Right cardiac atrium (tissue), 5 donors: ENCODE measurements at regions of chr11 and their contacts with region 1.

Region 1: GRCh38 chr11:76674517-76675400 is 4.2 kb upstream of the LRRC32 start:
- DNase-seq: peak in 1 of 3 donors; percentile 49
- ATAC-seq: no peak
- H3K4me3 ChIP-seq: no peak overlapping the region
- H3K27ac ChIP-seq: no peak overlapping the region
- H3K4me1 ChIP-seq: no peaks in the 10 kb centered on the region
- H3K27me3 ChIP-seq: no peaks in the 10 kb centered on the region

Region 2: GRCh38 chr11:76560219-76560618 is 114.5 kb before region 1 on chr11:
- intact Hi-C with region 1: loop called in 1 of 4 experiments (anchors 5 kb)
- DNase-seq: no peak
- ATAC-seq: peak in 1 of 2 donors; percentile 77
- H3K4me3 ChIP-seq: no peak overlapping the region
- H3K27ac ChIP-seq: no peak overlapping the region
- H3K4me1 ChIP-seq: peaks cover 5% of the 10 kb centered on the region
- H3K27me3 ChIP-seq: no peaks in the 10 kb centered on the region

Region 3: DNA sequence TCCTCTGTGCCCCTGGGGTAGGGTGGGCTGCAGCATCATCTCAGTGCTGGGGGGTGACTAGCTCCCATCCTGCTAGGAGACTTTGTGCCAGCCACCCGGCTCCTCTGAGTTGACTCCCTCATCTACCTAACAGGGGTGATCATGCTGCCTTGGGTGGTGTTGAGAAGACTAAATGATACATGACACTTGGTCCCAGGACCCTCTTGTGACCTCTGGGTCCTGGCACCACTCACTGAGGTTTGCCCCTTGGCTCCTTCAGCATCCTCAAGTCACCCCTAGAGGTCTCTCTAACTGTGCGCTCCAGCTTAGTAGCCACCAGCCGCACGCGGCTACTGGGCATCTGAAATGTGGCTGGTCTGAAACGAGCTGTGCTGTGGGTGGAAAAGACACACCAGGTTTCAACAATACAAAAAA is 76.3 kb before region 1 on chr11:
- intact Hi-C with region 1: loop called in 1 of 4 experiments (anchors 5 kb)
- DNase-seq: peak; percentile 63 to 79 (median 78)
- ATAC-seq: peak; percentile 47 to 54
- H3K4me3 ChIP-seq: no peak overlapping the region
- H3K27ac ChIP-seq: no peak overlapping the region
- H3K4me1 ChIP-seq: peaks cover 8% of the 10 kb centered on the region
- H3K27me3 ChIP-seq: no peaks in the 10 kb centered on the region

Region 4: DNA sequence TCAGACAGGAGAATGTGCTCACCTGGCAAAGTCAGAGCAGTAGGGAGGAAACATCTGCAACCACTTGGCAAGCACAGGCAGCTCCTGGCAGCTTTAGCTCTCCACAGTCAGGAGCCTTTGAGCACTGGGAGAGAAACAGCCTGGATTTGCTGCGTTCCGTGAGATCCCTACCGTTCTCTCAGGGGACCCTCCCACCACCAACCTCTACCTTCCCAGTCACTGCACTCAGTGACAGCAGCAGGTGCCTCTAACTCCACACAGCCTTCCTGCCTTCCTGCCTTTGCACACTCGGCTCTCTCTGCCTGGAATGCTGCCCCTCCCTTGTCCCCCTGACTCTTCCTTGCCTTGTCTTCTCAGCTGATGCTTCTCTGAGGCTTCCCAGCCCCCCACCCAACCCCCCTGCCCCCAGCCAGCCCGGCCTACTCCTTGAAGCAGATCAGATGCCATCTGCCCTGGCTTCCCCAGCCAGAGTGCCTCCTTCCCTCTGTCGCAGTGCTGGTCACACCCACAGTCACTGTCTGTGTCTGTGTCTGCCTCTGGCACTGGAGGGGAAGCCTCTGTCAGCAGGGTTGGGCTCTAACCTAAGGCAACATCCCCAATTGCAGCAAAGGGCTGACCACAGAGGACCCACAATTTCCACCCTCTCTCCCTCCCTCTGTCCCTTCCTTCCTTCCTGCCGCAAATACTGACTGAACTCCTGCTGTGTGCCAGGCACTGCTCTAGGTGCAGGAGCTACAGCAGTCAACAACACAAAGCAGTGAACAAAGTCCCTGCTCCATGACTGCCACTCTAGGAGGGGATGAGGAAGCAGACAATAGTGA is 93.5 kb after region 1 on chr11:
- intact Hi-C with region 1: no loop called
- DNase-seq: peak in 2 of 3 donors; percentile 73 to 78
- ATAC-seq: peak; percentile 17 to 22
- H3K4me3 ChIP-seq: no peak overlapping the region
- H3K27ac ChIP-seq: no peak overlapping the region
- H3K4me1 ChIP-seq: peaks cover 22% of the 10 kb centered on the region
- H3K27me3 ChIP-seq: no peaks in the 10 kb centered on the region